ENCODE measurements at regions of chr11 and their contacts with region 1.

Region 1: GRCh38 chr11:535519-536454 is at the start of gene HRAS:
- DNase-seq: peak; percentile 94
- H3K4me3 ChIP-seq: peak within 1 kb of the TSS; percentile 54 to 74 (median 69)
- H3K27ac ChIP-seq: no peak within 1 kb of the TSS
- H3K4me1 ChIP-seq: peaks cover 7% of the 10 kb centered on the region
- H3K27me3 ChIP-seq: no peaks in the 10 kb centered on the region
- CTCF ChIP-seq: no peak
- POLR2A ChIP-seq: peak; percentile 87
- total RNA-seq, gene HRAS: 103 TPM in 2 replicates

Region 2: DNA sequence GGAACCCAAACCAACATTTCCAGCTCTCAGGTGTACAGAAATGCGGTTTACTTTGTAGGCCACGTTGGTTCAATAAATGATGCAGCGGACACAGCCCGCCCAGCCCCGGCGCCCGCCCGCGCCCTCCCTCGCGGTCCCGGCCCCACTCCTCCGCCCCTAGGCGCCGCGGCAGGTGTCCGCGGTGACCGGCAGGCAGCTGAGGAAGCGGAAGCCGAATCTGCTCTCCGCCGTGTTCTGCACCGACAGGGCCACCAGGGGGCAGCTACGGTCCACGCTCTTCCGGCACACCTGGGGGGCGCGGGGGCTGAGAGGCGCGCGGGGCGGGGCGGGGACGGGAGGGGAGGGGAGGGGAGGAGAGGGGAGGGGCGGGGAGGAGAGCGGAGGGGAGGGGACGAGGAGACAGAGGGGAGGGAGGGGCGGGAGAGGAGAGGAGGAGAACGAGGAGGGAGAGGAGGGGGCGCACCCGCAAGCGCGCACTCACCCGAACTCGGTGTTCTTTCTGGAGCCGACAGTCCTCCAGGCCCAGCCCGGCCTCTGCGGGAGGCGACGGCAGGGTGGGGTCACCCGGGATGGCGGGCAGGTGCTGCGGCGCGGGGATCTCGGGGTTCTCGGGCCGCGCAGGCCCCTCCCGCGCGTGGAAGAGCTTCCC is 19.2 kb after region 1 on chr11:
- CTCF ChIA-PET with region 1: interaction called, 11 read pairs
- POLR2A ChIA-PET with region 1: no interaction called
- dilution Hi-C with region 1: no loop called
- intact Hi-C with region 1: loop called (anchors 2 kb)
- DNase-seq: no peak
- H3K4me3 ChIP-seq: no peak overlapping the region
- H3K27ac ChIP-seq: no peak overlapping the region
- H3K4me1 ChIP-seq: peaks cover 3% of the 10 kb centered on the region
- H3K27me3 ChIP-seq: peaks cover 13 to 21% of the 10 kb centered on the region in 2 experiments
- CTCF ChIP-seq: peak in 1 of 2 donors; percentile 54
- POLR2A ChIP-seq: no peak

Region 3: GRCh38 chr11:560305-561147 is 24.7 kb after region 1 on chr11 and contains the starts of genes LMNTD2 and RASSF7:
- CTCF ChIA-PET with region 1: no interaction called
- POLR2A ChIA-PET with region 1: no interaction called
- dilution Hi-C with region 1: no loop called
- intact Hi-C with region 1: loop called (anchors 2 kb)
- DNase-seq: peak; percentile 80
- H3K4me3 ChIP-seq: peak within 1 kb of the TSS; percentile 62 to 88 (median 74)
- H3K27ac ChIP-seq: no peak within 1 kb of the TSS
- H3K4me1 ChIP-seq: peaks cover 6% of the 10 kb centered on the region
- H3K27me3 ChIP-seq: peaks cover 11 to 17% of the 10 kb centered on the region in 2 experiments
- CTCF ChIP-seq: no peak
- POLR2A ChIP-seq: peak; percentile 58
- total RNA-seq, gene LMNTD2: 1.8 and 2.1 TPM in 2 replicates
- total RNA-seq, gene RASSF7: 12.2 and 14.1 TPM in 2 replicates

Region 4: GRCh38 chr11:695538-696248 is 159.9 kb after region 1 on chr11 and contains the start of gene TMEM80:
- CTCF ChIA-PET with region 1: no interaction called
- POLR2A ChIA-PET with region 1: no interaction called
- dilution Hi-C with region 1: no loop called
- intact Hi-C with region 1: loop called (anchors 5 kb)
- DNase-seq: peak; percentile 97
- H3K4me3 ChIP-seq: peak within 1 kb of the TSS; percentile 82 to 93 (median 84)
- H3K27ac ChIP-seq: peak within 1 kb of the TSS; percentile 94
- H3K4me1 ChIP-seq: peaks cover 23% of the 10 kb centered on the region
- H3K27me3 ChIP-seq: no peaks in the 10 kb centered on the region
- CTCF ChIP-seq: no peak
- POLR2A ChIP-seq: peak; percentile 91
- total RNA-seq, gene TMEM80: 24.1 and 26.6 TPM in 2 replicates

Measured in endothelial cell of umbilical vein (primary cell).